Posterior cingulate gyrus (tissue), 11 donors: ENCODE measurements at regions of chr3 and their contacts with region 1.

Region 1: GRCh38 chr3:53045518-53046170 is at the start of gene SFMBT1:
- DNase-seq: peak; percentile 40 to 90 (median 58)

Region 2: DNA sequence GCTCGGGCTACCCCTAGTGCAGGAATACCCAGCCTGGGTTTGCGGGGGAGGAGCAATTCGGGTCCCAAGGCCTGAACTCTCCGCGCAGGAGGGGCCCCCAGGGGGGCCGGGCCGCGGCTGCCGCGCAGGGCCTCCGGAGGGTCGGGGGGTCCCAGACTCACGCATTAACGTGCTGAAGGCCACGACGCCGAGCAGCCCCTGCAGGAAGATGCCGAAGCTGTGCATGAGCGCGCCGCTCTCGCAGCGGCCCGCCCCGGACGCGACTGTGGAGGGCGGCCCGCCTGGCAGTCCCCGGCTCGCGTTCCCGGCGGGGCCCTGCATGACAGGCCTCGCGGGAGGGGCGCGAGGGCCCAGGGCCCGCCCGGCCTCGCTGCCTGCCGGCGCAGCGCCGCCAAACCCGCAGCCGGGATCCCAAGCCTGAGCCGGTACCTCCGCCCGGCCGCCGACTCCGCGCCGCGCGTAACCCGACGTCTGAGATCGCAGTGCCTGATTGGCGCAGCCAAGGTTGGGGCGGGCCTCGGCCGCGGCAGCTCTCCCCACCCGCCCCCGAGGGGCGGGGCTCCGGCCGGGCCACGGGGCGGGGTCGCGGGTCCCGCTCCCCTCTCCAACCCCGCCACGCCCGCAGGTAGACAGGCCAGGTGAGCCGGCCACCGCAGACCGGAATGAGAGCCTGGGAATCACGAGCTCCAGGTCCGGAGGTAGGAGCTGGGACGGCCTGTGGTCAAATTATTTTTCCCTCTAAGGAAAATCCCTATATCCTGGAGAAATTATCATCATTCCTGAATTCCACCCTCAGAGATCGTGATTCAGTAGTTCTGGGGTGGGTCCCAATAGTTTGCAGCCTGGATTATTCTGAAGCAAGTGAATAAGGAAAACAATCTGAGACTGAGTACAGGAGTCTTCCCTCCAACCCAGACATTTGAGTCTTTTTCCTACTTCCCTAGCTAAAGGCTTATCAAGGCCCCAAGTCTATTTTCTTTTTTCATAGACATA is 148.2 kb before region 1 on chr3 and contains the start of gene STIMATE:
- intact Hi-C with region 1: loop called (anchors 10 kb)
- DNase-seq: peak; percentile 79 to 99 (median 90)

Region 3: GRCh38 chr3:52934630-52935530 is 110.8 kb before region 1 on chr3:
- intact Hi-C with region 1: no loop called
- DNase-seq: peak in 7 of 10 donors; percentile 12 to 89 (median 40)